ENCODE measurements at regions of chr11 and their contacts with region 1.

Region 1: DNA sequence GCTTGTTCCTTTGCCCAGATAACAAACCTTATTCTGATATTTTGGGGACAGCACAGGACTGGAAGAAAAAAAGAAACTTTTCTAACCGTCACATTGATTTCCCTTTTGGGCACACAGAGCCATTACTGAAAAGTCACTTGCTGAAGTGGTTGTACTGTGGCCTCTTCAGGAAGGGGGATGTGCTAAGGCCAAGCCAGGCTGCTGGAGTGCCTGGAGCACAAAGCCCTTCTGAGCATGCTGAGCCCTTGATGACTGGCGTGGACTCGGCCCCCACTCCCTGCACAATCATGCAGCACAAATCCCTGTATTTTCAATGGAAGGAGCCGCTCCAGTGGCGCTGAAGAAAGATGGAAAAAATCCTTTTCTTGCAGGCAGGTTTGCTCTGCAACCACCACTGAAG is 164.2 kb downstream of the NTM start:
- DNase-seq: no peak
- ATAC-seq: no peak
- H3K4me3 ChIP-seq: no peak overlapping the region
- H3K27ac ChIP-seq: no peak overlapping the region
- H3K4me1 ChIP-seq: no peaks in the 10 kb centered on the region
- H3K27me3 ChIP-seq: no peaks in the 10 kb centered on the region; the same call in 1 of the 2 replicates
- CTCF ChIP-seq: no peak

Region 2: GRCh38 chr11:131481303-131481702 is 53.3 kb before region 1 on chr11:
- CTCF ChIA-PET with region 1: no interaction called
- POLR2A ChIA-PET with region 1: no interaction called
- in situ Hi-C with region 1: no loop called
- intact Hi-C with region 1: loop called (anchors 5 kb)
- DNase-seq: no peak
- ATAC-seq: no peak
- H3K4me3 ChIP-seq: no peak overlapping the region
- H3K27ac ChIP-seq: no peak overlapping the region
- H3K4me1 ChIP-seq: no peaks in the 10 kb centered on the region
- H3K27me3 ChIP-seq: no peaks in the 10 kb centered on the region
- CTCF ChIP-seq: no peak